ENCODE measurements at regions of chr7 and their contacts with region 1.

Region 1: DNA sequence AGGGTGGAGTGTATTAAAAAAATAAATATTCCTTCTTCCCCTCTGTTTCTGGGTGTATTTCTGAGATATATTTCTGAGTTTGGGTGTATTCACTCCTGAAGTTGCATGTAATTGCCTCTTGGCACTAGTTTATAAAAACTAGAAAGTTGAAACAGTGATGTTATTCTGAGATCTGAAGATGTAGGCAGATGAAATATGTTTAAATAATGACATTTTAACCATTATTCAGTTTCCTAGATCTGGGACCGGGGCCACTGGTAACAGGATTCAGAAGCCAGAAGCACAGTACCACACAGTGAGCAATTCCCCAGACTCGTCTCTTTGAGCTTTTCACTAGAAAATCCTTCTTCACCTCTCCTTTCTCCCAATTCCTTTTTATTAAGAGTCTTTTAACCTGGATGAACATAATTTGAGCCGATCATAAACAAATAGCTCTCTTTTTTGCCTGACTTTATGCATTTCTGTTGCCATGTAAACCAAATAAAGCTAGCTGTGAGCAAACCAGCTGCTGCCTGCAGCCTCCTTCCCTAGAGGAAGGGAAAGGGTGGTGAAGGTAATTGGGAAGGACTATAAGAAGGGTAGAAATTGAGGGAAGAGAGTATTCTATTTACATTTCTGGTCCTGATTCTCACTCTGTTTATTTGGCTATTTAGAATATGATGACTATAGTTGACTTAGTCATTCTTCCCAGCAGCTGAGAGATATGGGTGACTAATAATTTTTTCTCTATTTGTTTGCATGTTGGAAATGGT is 101.8 kb upstream of the STRIP2 start:
- DNase-seq: peak; percentile 21
- H3K4me3 Mint-ChIP-seq: no peak overlapping the region
- H3K27ac Mint-ChIP-seq: no peak overlapping the region
- H3K4me1 Mint-ChIP-seq: peaks cover 7% of the 10 kb centered on the region
- H3K27me3 Mint-ChIP-seq: no peaks in the 10 kb centered on the region
- CTCF ChIP-seq: no peak

Region 2: GRCh38 chr7:129308047-129308446 is 24.4 kb before region 1 on chr7:
- CTCF ChIA-PET with region 1: interaction called, 3 read pairs
- POLR2A ChIA-PET with region 1: interaction called, 11 read pairs
- intact Hi-C with region 1: no loop called
- DNase-seq: peak; percentile 90
- H3K4me3 Mint-ChIP-seq: peak overlapping the region; percentile 22
- H3K27ac Mint-ChIP-seq: peak overlapping the region; percentile 92
- H3K4me1 Mint-ChIP-seq: peaks cover 15% of the 10 kb centered on the region
- H3K27me3 Mint-ChIP-seq: no peaks in the 10 kb centered on the region
- CTCF ChIP-seq: no peak

Region 3: DNA sequence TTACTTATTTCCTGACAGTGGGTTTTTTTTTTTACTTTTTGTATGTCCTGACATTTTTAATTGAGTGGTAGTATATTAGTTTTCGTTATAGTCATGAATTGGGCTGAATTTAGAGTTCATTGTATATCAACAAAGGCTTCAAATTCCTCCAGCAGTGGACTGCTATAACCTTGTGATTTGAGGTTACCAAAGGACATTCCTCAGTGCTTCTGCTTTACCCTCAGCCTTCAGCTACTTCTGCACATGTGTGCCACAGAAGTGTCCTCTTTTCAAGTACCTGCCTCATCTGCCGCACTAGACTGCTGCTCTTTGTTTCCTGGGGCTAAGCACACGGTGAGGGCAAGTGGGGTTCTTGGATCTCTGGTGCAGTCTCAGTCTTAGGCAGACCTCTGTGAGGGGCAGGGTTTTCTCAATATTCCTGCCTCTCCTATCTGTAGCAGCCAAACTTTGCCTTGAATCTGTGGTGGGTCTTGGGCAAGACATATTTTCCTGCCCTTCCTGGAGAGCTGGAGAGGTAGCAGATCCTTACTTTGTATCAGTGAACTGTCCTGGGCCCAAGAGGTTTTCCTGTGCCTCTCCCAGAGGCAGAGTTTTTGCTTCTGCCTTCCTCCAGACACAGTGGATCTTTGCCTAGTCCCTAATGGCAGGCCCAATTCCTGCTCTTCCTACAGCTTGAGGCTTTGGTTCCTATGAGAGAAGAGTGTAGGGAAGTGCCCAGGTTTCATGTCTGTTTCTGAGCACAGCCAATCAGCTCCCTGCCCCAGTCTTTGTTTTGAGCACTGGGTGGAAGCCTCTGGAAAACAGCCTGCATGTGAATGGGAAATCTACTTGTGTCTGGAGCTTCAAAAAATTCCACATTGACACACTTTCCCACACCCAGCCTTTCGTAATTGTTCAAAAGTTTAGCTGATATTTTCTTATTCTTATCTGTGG is 62.8 kb after region 1 on chr7:
- CTCF ChIA-PET with region 1: no interaction called
- POLR2A ChIA-PET with region 1: no interaction called
- intact Hi-C with region 1: no loop called
- DNase-seq: no peak
- H3K4me3 Mint-ChIP-seq: no peak overlapping the region
- H3K27ac Mint-ChIP-seq: no peak overlapping the region
- H3K4me1 Mint-ChIP-seq: no peaks in the 10 kb centered on the region
- H3K27me3 Mint-ChIP-seq: no peaks in the 10 kb centered on the region
- CTCF ChIP-seq: no peak